B cell (primary cell): ENCODE measurements at regions of chr15 and their contacts with region 1.

Region 1: GRCh38 chr15:101294731-101295606 is at the start of gene SNRPA1:
- DNase-seq: peak; percentile 96
- ATAC-seq: peak; percentile 82
- H3K4me3 ChIP-seq: peak within 1 kb of the TSS; percentile 70 to 96 (median 93)
- H3K4me3 Mint-ChIP-seq: peak within 1 kb of the TSS; percentile 96
- H3K27ac ChIP-seq: peak within 1 kb of the TSS; percentile 91 to 93
- H3K27ac Mint-ChIP-seq: peak within 1 kb of the TSS; percentile 98
- H3K4me1 ChIP-seq: peaks cover 29 to 30% of the 10 kb centered on the region in 2 donors
- H3K4me1 Mint-ChIP-seq: peaks cover 45% of the 10 kb centered on the region
- H3K27me3 ChIP-seq: no peaks in the 10 kb centered on the region
- H3K27me3 Mint-ChIP-seq: no peaks in the 10 kb centered on the region
- CTCF ChIP-seq: no peak
- total RNA-seq, gene SNRPA1: 104 and 113 TPM in 2 replicates

Region 2: DNA sequence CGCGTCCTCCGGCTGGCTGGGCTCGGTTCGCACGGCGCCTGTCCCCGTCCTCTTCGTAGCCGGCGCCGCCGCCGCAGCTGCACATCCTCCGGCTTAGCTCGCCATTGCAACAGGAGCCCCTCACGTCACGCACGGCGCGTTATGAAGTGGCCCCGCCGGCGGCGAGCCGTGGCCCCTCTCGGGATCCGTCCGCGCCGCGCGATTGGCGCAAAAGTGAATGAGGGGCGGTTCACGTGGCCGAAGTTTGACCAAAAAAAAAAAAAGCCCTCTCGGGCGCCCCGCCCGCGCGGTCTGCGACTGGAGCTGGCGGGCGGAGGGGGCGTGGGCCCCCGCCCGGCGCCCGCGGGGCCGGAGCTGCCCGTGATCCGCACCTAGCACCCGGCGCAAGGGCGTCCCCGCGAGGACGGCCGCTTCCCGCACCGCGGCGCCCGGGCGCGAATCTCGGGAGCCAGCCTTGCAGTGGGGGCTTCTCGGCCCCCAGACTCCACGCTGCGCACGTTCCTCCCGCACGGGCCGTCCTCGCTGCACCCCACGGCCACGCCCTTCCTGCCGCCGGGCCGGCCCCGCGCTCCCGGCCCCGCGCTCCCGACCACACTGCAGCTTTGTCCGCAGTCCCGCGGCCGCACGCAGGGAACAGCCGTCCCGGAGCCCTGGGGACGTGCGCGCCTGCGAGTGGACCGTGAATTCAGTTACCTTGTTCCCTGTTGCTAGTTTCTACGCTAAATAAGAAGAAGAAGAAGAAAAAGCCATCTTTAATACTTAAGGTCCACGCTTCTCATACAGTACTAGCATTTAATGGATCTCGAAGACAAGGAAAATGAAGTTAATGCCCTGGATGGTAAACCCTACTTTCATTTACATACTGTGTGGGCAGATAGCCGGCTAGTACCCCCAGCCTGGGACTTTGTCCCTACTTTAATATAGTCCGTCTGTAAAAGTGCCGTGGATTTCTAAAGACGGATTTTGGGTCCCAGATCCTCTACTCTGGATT is 42.8 kb before region 1 on chr15 and contains the start of gene CHSY1:
- CTCF ChIA-PET with region 1: no interaction called
- POLR2A ChIA-PET with region 1: interaction called, 3 read pairs
- intact Hi-C with region 1: loop called (anchors 1 kb)
- DNase-seq: peak; percentile 96
- ATAC-seq: peak; percentile 81
- H3K4me3 ChIP-seq: peak within 1 kb of the TSS; percentile 50 to 81 (median 73)
- H3K4me3 Mint-ChIP-seq: peak within 1 kb of the TSS; percentile 93
- H3K27ac ChIP-seq: peak within 1 kb of the TSS; percentile 30 to 53
- H3K27ac Mint-ChIP-seq: peak within 1 kb of the TSS; percentile 97
- H3K4me1 ChIP-seq: peaks cover 29 to 31% of the 10 kb centered on the region in 2 donors
- H3K4me1 Mint-ChIP-seq: peaks cover 30% of the 10 kb centered on the region
- H3K27me3 ChIP-seq: peaks cover 0 to 4% (median 0%) of the 10 kb centered on the region in 4 experiments
- H3K27me3 Mint-ChIP-seq: no peaks in the 10 kb centered on the region
- CTCF ChIP-seq: no peak
- total RNA-seq, gene CHSY1: 18.9 and 20.3 TPM in 2 replicates

Region 3: GRCh38 chr15:101277038-101277882 is 17.7 kb before region 1 on chr15 and contains the start of gene SELENOS:
- CTCF ChIA-PET with region 1: interaction called, 19 read pairs
- POLR2A ChIA-PET with region 1: no interaction called
- intact Hi-C with region 1: loop called (anchors 1 kb)
- DNase-seq: peak; percentile 91
- ATAC-seq: peak; percentile 97
- H3K4me3 ChIP-seq: peak within 1 kb of the TSS; percentile 68 to 96 (median 84)
- H3K4me3 Mint-ChIP-seq: peak within 1 kb of the TSS; percentile 96
- H3K27ac ChIP-seq: peak within 1 kb of the TSS; percentile 39 to 85
- H3K27ac Mint-ChIP-seq: peak within 1 kb of the TSS; percentile 84
- H3K4me1 ChIP-seq: peaks cover 10 to 20% of the 10 kb centered on the region in 2 donors
- H3K4me1 Mint-ChIP-seq: peaks cover 12% of the 10 kb centered on the region
- H3K27me3 ChIP-seq: no peaks in the 10 kb centered on the region
- H3K27me3 Mint-ChIP-seq: no peaks in the 10 kb centered on the region
- CTCF ChIP-seq: no peak
- total RNA-seq, gene SELENOS: 26.8 and 27.3 TPM in 2 replicates

Region 4: DNA sequence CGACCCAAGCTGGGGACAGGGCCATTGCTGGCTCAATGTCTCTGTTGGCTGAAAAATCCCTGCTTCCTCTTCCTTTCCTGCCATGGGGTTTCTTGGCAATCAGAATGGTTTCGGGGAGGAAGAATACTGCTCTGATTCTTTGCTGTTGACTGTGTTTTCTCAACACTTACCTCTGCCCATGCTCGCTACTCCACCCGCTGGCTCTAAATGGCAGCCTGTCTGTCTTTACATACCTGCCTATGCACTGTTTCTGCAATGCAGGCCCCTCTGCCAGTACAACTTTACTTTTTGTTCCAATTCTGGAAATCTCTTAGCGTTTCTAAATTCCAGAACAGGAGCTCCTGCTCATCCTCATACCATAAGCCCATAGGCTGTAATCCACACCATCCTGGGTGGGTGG is 38.4 kb after region 1 on chr15:
- CTCF ChIA-PET with region 1: no interaction called
- POLR2A ChIA-PET with region 1: interaction called, 3 read pairs
- intact Hi-C with region 1: loop called (anchors 1 kb)
- DNase-seq: no peak
- ATAC-seq: no peak
- H3K4me3 ChIP-seq: no peak overlapping the region
- H3K4me3 Mint-ChIP-seq: no peak overlapping the region
- H3K27ac ChIP-seq: no peak overlapping the region
- H3K27ac Mint-ChIP-seq: no peak overlapping the region
- H3K4me1 ChIP-seq: peaks cover 4 to 12% of the 10 kb centered on the region in 2 donors
- H3K4me1 Mint-ChIP-seq: peaks cover 10% of the 10 kb centered on the region
- H3K27me3 ChIP-seq: peaks cover 0 to 15% (median 0%) of the 10 kb centered on the region in 4 experiments
- H3K27me3 Mint-ChIP-seq: peaks cover 23% of the 10 kb centered on the region
- CTCF ChIP-seq: no peak

Region 5: DNA sequence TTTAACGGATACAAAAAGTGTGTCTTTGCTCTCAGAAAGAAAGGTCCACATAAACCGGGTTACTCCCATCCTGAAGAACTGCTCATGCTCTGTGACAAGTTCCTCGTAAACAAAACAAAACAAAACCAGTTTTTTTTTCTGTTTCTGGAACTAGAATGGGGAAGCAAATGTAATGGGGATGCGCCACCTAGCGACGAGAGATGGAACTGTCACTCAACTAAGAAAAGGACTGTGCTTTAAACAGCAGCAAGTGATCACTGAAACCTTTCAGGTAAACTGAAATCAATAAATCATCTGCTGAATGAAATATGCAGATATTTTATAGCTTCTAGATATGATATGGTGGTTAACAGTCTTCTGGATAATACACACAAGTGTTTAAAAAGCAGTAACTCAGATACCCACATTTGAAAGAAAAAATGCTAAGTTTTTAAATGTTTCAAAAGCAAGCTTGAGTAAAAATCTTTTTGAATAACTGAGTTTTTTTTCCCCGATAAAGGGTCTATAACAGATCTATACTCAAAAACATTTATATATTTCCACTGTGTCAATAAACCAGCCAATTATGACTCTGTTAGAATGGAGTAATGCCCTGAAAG is 346.3 kb after region 1 on chr15:
- CTCF ChIA-PET with region 1: interaction called, 159 read pairs
- POLR2A ChIA-PET with region 1: no interaction called
- intact Hi-C with region 1: loop called (anchors 1 kb)
- DNase-seq: peak; percentile 86
- ATAC-seq: peak; percentile 73
- H3K4me3 ChIP-seq: peak overlapping the region in 1 of 5 experiments; percentile 32
- H3K4me3 Mint-ChIP-seq: peak overlapping the region; percentile 33
- H3K27ac ChIP-seq: peak overlapping the region; percentile 37 to 53
- H3K27ac Mint-ChIP-seq: peak overlapping the region; percentile 82
- H3K4me1 ChIP-seq: peaks cover 18 to 19% of the 10 kb centered on the region in 2 donors
- H3K4me1 Mint-ChIP-seq: peaks cover 18% of the 10 kb centered on the region
- H3K27me3 ChIP-seq: no peaks in the 10 kb centered on the region
- H3K27me3 Mint-ChIP-seq: no peaks in the 10 kb centered on the region
- CTCF ChIP-seq: peak; percentile 93

Region 6: GRCh38 chr15:101652098-101652782 is 357.3 kb after region 1 on chr15 and contains the start of gene TM2D3:
- CTCF ChIA-PET with region 1: interaction called, 27 read pairs
- POLR2A ChIA-PET with region 1: interaction called, 14 read pairs
- intact Hi-C with region 1: loop called (anchors 1 kb)
- DNase-seq: peak; percentile 97
- ATAC-seq: peak; percentile 89
- H3K4me3 ChIP-seq: peak within 1 kb of the TSS; percentile 79 to 94 (median 89)
- H3K4me3 Mint-ChIP-seq: peak within 1 kb of the TSS; percentile 93
- H3K27ac ChIP-seq: peak within 1 kb of the TSS; percentile 94 to 98
- H3K27ac Mint-ChIP-seq: peak within 1 kb of the TSS; percentile 98
- H3K4me1 ChIP-seq: peaks cover 21 to 23% of the 10 kb centered on the region in 2 donors
- H3K4me1 Mint-ChIP-seq: peaks cover 33% of the 10 kb centered on the region
- H3K27me3 ChIP-seq: no peaks in the 10 kb centered on the region
- H3K27me3 Mint-ChIP-seq: no peaks in the 10 kb centered on the region
- CTCF ChIP-seq: peak; percentile 76
- total RNA-seq, gene TM2D3: 56.4 and 63.5 TPM in 2 replicates

Region 7: GRCh38 chr15:101723874-101724674 is 429.1 kb after region 1 on chr15 and contains the start of gene TARS3:
- CTCF ChIA-PET with region 1: interaction called, 7 read pairs
- POLR2A ChIA-PET with region 1: interaction called, 5 read pairs
- intact Hi-C with region 1: loop called (anchors 2 kb)
- DNase-seq: peak; percentile 96
- ATAC-seq: peak; percentile 89
- H3K4me3 ChIP-seq: peak within 1 kb of the TSS; percentile 49 to 74 (median 69)
- H3K4me3 Mint-ChIP-seq: peak within 1 kb of the TSS; percentile 82
- H3K27ac ChIP-seq: peak within 1 kb of the TSS; percentile 45 to 77
- H3K27ac Mint-ChIP-seq: peak within 1 kb of the TSS; percentile 80
- H3K4me1 ChIP-seq: peaks cover 10 to 11% of the 10 kb centered on the region in 2 donors
- H3K4me1 Mint-ChIP-seq: peaks cover 17% of the 10 kb centered on the region
- H3K27me3 ChIP-seq: no peaks in the 10 kb centered on the region
- H3K27me3 Mint-ChIP-seq: no peaks in the 10 kb centered on the region
- CTCF ChIP-seq: no peak
- total RNA-seq, gene TARS3: 27.0 and 32.3 TPM in 2 replicates